ENCODE measurements at regions of chr11 and their contacts with region 1.

Region 1: DNA sequence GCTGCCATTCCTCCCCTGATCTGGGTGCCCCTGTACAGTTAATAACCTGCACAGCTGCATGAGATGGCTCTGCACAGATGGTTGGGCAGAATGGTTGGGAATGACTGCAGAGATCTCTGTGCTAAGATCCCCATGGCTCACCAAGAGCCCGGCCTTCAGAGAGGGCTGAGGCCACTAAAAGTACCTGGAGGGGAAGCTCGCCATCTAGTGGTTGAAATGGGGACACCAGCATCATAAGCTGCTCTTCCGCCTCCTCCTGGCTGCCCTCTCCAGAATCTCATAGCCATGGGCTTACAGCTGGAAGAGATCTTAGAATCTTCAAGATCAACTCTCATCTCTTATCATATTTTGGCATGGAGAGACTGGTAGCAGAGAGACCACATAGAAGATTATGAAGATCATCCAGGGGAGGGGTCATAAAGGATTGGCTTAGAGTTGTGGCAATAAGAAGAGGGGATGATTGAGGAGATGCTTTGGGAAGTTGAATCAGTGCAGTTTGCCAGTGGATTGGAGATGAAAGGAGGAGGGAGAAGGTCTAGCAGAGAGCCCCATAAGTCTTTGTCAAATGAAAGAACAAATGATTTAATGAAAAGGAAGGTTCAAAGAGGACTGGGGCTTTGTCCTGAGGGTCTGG is 22.0 kb upstream of the TLCD5 start:
- DNase-seq: peak in 1 of 2 donors; percentile 82
- H3K4me3 ChIP-seq: no peak overlapping the region
- H3K27ac ChIP-seq: no peak overlapping the region
- H3K4me1 ChIP-seq: peaks cover 0 to 4% of the 10 kb centered on the region in 2 donors
- H3K27me3 ChIP-seq: no peaks in the 10 kb centered on the region
- CTCF ChIP-seq: peak; percentile 57 to 86 (median 81)

Region 2: GRCh38 chr11:120172054-120172911 is 130.8 kb before region 1 on chr11:
- intact Hi-C with region 1: loop called (anchors 1 kb)
- DNase-seq: peak in 1 of 2 donors; percentile 75
- H3K4me3 ChIP-seq: no peak overlapping the region
- H3K27ac ChIP-seq: no peak overlapping the region
- H3K4me1 ChIP-seq: peaks cover 0 to 11% of the 10 kb centered on the region in 2 donors
- H3K27me3 ChIP-seq: no peaks in the 10 kb centered on the region
- CTCF ChIP-seq: peak; percentile 49 to 83 (median 70)

Region 3: GRCh38 chr11:120235024-120235861 is 67.9 kb before region 1 on chr11:
- intact Hi-C with region 1: loop called (anchors 1 kb)
- DNase-seq: peak in 1 of 2 donors; percentile 75
- H3K4me3 ChIP-seq: no peak overlapping the region
- H3K27ac ChIP-seq: no peak overlapping the region
- H3K4me1 ChIP-seq: no peaks in the 10 kb centered on the region
- H3K27me3 ChIP-seq: peaks cover 5% of the 10 kb centered on the region
- CTCF ChIP-seq: peak; percentile 60 to 83 (median 64)